PC-3 (cell line): ENCODE measurements at regions of chr1 and their contacts with region 1.

Region 1: DNA sequence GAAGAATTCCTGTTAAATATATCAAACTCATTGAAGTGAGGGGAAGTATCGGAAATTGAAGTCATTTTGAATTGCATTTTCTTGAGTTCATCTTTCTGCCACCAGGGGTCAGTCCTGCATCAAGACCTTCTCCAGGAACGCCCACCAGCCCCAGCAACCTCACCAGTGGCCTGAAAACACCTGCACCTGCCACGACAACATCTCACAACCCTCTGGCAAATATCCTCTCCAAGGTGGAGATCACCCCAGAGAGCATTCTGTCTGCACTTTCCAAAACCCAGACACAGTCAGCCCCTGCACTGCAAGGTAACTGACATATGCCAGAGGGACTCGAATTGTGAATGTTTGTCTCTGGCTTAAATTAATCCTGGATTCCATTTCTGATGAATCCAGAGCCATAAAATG is 22.8 kb upstream of the TARS2 start:
- DNase-seq: peak; percentile 79
- ATAC-seq: peak; percentile 66
- H3K4me3 ChIP-seq: no peak overlapping the region
- H3K27ac ChIP-seq: no peak overlapping the region
- H3K4me1 ChIP-seq: no peaks in the 10 kb centered on the region
- H3K27me3 ChIP-seq: no peaks in the 10 kb centered on the region
- CTCF ChIP-seq: peak; percentile 83

Region 2: DNA sequence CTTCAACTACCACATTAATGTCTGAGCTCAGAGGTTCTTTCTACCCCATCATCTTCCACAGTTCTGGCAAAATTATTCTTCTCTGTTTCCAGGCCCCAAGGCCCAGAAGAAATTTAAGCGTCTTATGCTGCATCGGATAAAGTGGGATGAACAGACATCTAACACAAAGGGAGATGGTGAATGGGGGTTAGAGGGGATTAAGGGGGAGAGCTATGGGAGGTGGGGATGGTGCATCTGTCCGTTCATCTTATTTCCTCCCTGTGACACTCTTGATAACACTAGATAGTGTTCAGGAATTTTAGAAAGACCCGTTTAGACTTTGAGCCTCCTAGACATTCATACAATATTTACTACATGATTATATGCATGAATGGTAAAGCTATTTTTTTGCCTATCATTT is 118.1 kb before region 1 on chr1:
- CTCF ChIA-PET with region 1: no interaction called
- POLR2A ChIA-PET with region 1: interaction called, 10 read pairs
- intact Hi-C with region 1: no loop called
- DNase-seq: no peak
- ATAC-seq: no peak
- H3K4me3 ChIP-seq: no peak overlapping the region
- H3K27ac ChIP-seq: no peak overlapping the region
- H3K4me1 ChIP-seq: no peaks in the 10 kb centered on the region
- H3K27me3 ChIP-seq: no peaks in the 10 kb centered on the region
- CTCF ChIP-seq: no peak

Region 3: DNA sequence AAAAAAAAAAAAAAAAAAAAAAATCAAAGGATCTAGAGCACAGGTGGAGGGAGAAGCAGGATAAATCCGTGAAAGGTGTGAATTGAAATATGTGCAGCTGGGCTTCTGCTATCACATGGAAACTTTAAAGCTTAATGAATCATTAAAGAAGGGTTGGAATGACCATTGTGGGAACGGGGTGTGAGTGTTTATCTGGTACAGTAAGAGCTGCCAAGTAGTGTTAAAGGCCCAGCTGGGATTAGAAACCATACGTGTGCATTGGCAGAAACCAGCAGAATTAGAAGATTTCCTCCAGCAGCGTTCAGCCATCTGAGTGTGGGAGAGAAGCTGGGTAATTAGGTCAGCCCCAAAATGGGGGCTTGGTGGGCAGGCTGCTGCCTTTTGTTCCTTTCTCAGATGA is 64.6 kb after region 1 on chr1:
- CTCF ChIA-PET with region 1: no interaction called
- POLR2A ChIA-PET with region 1: no interaction called
- intact Hi-C with region 1: loop called (anchors 1 kb)
- DNase-seq: no peak
- ATAC-seq: peak; percentile 57
- H3K4me3 ChIP-seq: no peak overlapping the region
- H3K27ac ChIP-seq: no peak overlapping the region
- H3K4me1 ChIP-seq: peaks cover 13% of the 10 kb centered on the region; the same call in 1 of the 2 replicates
- H3K27me3 ChIP-seq: no peaks in the 10 kb centered on the region
- CTCF ChIP-seq: no peak

Region 4: DNA sequence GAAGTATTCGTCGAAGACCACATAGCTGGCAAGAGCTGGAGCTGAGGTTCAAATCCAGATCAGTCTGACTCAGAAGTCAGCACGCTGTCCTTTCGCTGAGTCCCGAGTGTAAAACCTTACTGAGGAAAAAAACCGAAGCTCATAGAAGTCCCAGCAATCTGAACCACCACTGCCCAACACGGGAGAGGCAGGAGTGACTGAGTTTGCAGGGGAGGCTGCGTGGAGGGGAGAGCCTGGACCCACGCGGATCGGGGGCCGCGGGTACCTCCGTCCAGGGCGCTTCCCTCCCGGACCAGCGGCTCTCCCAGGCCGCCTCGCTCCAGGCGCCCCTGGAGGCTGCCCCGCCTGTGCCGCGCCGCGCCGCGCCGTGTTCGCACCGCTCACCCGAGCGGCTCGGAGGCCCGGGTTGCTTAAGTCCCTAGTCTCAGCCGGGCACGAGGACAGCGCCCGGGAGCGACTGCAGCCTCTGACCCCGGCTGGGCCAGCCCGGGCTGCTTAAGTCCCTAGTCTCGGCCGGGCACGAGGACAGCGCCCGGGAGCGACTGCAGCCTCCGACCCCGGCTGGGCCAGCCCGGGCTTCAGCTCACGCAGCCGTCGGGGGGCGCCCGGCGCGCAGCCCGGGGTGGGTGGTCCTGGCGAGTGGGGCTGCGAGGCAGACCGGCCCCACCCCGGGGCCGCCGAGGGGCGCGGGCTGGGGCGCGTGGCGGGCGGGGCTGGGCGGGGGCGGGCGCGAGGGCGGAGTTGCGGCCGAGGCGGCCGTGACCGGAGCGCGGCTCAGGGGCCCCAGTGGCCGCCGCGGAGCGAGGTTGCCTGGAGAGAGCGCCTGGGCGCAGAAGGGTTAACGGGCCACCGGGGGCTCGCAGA is 84.4 kb after region 1 on chr1 and contains the start of gene ADAMTSL4:
- CTCF ChIA-PET with region 1: no interaction called
- POLR2A ChIA-PET with region 1: no interaction called
- intact Hi-C with region 1: loop called (anchors 5 kb)
- DNase-seq: peak; percentile 65
- ATAC-seq: peak; percentile 77
- H3K4me3 ChIP-seq: peak within 1 kb of the TSS; percentile 72
- H3K27ac ChIP-seq: peak within 1 kb of the TSS; percentile 4; the same call in 1 of the 2 replicates
- H3K4me1 ChIP-seq: peaks cover 20% of the 10 kb centered on the region
- H3K27me3 ChIP-seq: no peaks in the 10 kb centered on the region
- CTCF ChIP-seq: peak; percentile 28; the same call in 1 of the 2 replicates
- total RNA-seq, gene ADAMTSL4: 0.81 and 0.87 TPM in 2 replicates

Region 5: GRCh38 chr1:150955280-150955679 is 490.9 kb after region 1 on chr1:
- CTCF ChIA-PET with region 1: no interaction called
- POLR2A ChIA-PET with region 1: no interaction called
- intact Hi-C with region 1: no loop called
- DNase-seq: no peak
- ATAC-seq: no peak
- H3K4me3 ChIP-seq: no peak overlapping the region
- H3K27ac ChIP-seq: no peak overlapping the region
- H3K4me1 ChIP-seq: no peaks in the 10 kb centered on the region
- H3K27me3 ChIP-seq: no peaks in the 10 kb centered on the region
- CTCF ChIP-seq: no peak